Endothelial cell of umbilical vein (primary cell): ENCODE measurements at regions of chr5 and their contacts with region 1.

Region 1: GRCh38 chr5:160508780-160509361 is 87.2 kb downstream of the PTTG1 start:
- DNase-seq: peak; percentile 81
- H3K4me3 ChIP-seq: no peak overlapping the region
- H3K27ac ChIP-seq: no peak overlapping the region
- H3K4me1 ChIP-seq: no peaks in the 10 kb centered on the region
- H3K27me3 ChIP-seq: peaks cover 0 to 5% of the 10 kb centered on the region in 2 experiments
- CTCF ChIP-seq: peak; percentile 70
- POLR2A ChIP-seq: no peak

Region 2: DNA sequence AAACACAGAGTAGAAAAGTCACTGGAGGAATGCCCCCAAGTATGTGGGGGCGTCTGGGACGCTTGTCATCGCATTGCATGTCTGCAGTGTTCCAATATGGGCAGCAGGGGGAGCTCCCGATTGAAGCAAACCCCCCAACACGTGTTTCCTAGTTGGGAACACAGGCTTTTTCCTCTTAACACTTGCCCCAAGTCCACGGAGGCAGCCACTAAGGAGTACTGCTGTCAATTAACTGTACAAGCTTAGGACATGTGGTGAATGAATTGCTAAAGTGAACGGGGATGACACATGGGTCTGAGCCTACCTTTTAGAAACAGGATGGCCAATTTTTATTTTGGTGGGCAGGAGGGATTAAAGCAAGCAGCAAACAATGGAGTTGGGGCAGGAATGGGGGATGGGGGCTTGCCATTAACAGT is 1035.5 kb after region 1 on chr5:
- CTCF ChIA-PET with region 1: no interaction called
- POLR2A ChIA-PET with region 1: no interaction called
- dilution Hi-C with region 1: no loop called
- intact Hi-C with region 1: loop called (anchors 10 kb)
- DNase-seq: peak; percentile 12
- H3K4me3 ChIP-seq: no peak overlapping the region
- H3K27ac ChIP-seq: no peak overlapping the region
- H3K4me1 ChIP-seq: no peaks in the 10 kb centered on the region
- H3K27me3 ChIP-seq: peaks cover 9 to 28% of the 10 kb centered on the region in 2 experiments
- CTCF ChIP-seq: peak; percentile 66 to 72
- POLR2A ChIP-seq: no peak